ENCODE measurements at regions of chr10 and their contacts with region 1.

Region 1: GRCh38 chr10:5873515-5873995 is 16.1 kb downstream of the ANKRD16 start:
- DNase-seq: peak; percentile 59
- ATAC-seq: peak; percentile 98
- H3K4me3 ChIP-seq: peak overlapping the region; percentile 26; the same call in 1 of the 2 replicates
- H3K27ac ChIP-seq: 0 out of 2 replicates have a peak overlapping the region, but pooled peaks have one; percentile 18
- H3K4me1 ChIP-seq: peaks cover 3% of the 10 kb centered on the region
- H3K27me3 ChIP-seq: no peaks in the 10 kb centered on the region
- CTCF ChIP-seq: peak; percentile 64 to 73 (median 66)
- EP300 ChIP-seq: no peak
- POLR2A ChIP-seq: no peak
- RAD21 ChIP-seq: peak; percentile 71

Region 2: DNA sequence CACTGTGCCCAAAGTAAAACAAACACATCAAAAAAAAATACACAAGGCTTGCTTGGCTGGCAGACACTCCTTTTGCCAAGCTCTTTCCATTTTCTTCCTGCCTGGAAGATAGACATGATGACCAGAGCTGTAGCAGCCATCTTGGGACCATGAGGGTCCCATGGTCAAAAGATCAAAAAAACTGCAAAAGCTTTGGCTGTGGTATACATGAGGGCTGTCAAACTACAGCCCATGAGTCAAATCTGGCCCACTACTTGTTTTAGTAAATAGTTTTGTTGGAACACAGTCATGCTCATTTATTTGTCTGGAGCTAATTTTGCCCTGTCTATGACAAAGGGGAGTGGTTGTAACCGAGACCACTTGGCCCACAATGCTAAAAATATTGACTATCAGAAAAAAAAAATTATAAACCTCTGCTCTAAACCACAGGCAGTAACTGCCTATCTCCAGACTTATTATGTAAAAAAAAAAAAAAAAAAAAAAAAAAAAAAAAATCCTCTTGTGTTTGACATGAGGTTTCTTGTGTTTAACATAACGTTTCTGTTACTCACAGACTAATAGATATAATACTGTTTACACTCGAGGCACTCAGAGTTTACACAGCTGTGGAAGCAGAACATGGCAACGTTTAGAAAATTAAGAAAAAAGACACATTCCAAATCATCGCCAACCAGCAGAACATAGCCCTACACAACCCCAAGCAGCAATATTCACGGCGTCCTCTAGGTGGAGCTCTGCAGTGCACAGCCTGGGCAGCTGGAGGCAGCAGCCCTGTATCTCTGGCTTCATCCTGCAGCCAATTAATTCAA is 244.0 kb before region 1 on chr10:
- CTCF ChIA-PET with region 1: interaction called, 14 read pairs
- POLR2A ChIA-PET with region 1: no interaction called
- RAD21 ChIA-PET with region 1: interaction called, 3 read pairs
- SMC1A ChIA-PET with region 1: no interaction called
- in situ Hi-C with region 1: no loop called
- intact Hi-C with region 1: loop called (anchors 2 kb)
- DNase-seq: peak; percentile 25
- ATAC-seq: peak; percentile 98
- H3K4me3 ChIP-seq: no peak overlapping the region
- H3K27ac ChIP-seq: no peak overlapping the region
- H3K4me1 ChIP-seq: peaks cover 8% of the 10 kb centered on the region
- H3K27me3 ChIP-seq: peaks cover 3 to 5% of the 10 kb centered on the region in 2 experiments; a peak in 3 of 4 replicates
- CTCF ChIP-seq: peak; percentile 82 to 99 (median 97)
- EP300 ChIP-seq: no peak
- POLR2A ChIP-seq: no peak
- RAD21 ChIP-seq: peak; percentile 88

Region 3: DNA sequence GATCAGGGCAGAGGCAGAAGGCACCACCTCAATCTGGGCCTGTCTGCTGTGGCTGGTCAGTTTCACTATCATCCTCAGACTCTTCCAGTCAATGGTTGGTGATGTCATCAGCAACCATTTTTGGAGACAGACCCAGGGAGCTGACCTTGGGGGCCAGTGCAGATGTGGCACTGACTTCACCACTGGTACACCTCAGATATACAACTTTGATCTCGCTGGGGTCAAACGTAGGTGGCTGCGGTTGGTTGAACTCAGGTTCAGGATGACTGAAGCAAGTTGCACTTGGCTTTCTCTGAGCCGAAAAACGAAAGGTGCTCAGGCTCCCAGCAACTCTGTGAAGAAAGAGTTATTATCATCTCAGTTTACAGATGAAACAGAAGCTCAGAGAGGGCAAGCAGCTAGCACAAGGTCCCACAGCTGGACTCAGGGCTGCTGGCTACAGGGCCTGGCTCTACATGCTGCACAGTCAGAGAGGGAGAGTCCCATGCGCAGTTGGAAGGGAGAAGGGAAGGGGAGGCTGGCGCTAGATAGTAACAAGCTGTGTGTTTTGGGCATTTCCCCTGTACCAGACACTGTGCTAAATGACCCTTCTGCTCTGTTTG is 11.1 kb before region 1 on chr10:
- CTCF ChIA-PET with region 1: interaction called, 39 read pairs
- POLR2A ChIA-PET with region 1: interaction called, 3 read pairs
- RAD21 ChIA-PET with region 1: interaction called, 17 read pairs
- SMC1A ChIA-PET with region 1: interaction called, 20 read pairs
- in situ Hi-C with region 1: no loop called
- intact Hi-C with region 1: no loop called
- DNase-seq: peak; percentile 94
- ATAC-seq: peak; percentile 96
- H3K4me3 ChIP-seq: peak overlapping the region; percentile 34
- H3K27ac ChIP-seq: peak overlapping the region; percentile 73
- H3K4me1 ChIP-seq: peaks cover 20% of the 10 kb centered on the region
- H3K27me3 ChIP-seq: no peaks in the 10 kb centered on the region
- CTCF ChIP-seq: no peak
- EP300 ChIP-seq: peak; percentile 74 to 88; a peak in 2 of 4 replicates
- POLR2A ChIP-seq: peak; percentile 46; the same call in 1 of the 2 replicates
- RAD21 ChIP-seq: no peak

Region 4: GRCh38 chr10:6033954-6034353 is 160.4 kb after region 1 on chr10:
- CTCF ChIA-PET with region 1: no interaction called
- POLR2A ChIA-PET with region 1: no interaction called
- RAD21 ChIA-PET with region 1: no interaction called
- SMC1A ChIA-PET with region 1: no interaction called
- in situ Hi-C with region 1: no loop called
- intact Hi-C with region 1: no loop called
- DNase-seq: no peak
- ATAC-seq: no peak
- H3K4me3 ChIP-seq: no peak overlapping the region
- H3K27ac ChIP-seq: no peak overlapping the region
- H3K4me1 ChIP-seq: peaks cover 12% of the 10 kb centered on the region; the same call in 1 of the 2 replicates
- H3K27me3 ChIP-seq: no peaks in the 10 kb centered on the region
- CTCF ChIP-seq: no peak
- EP300 ChIP-seq: no peak
- POLR2A ChIP-seq: no peak
- RAD21 ChIP-seq: no peak

Measured in GM12878 (cell line).